SK-N-SH (cell line): ENCODE measurements at regions of chr12 and their contacts with region 1.

Region 1: GRCh38 chr12:121095544-121096198 is 37.0 kb upstream of the P2RX7 start:
- DNase-seq: peak; percentile 94
- H3K4me3 ChIP-seq: peak overlapping the region; percentile 43 to 67
- H3K27ac ChIP-seq: no peak overlapping the region
- H3K4me1 ChIP-seq: peaks cover 0 to 5% of the 10 kb centered on the region in 2 experiments; a peak in 1 of 4 replicates
- H3K27me3 ChIP-seq: peaks cover 7% of the 10 kb centered on the region; the same call in 1 of the 2 replicates
- CTCF ChIP-seq: peak; percentile 71
- EP300 ChIP-seq: no peak
- RAD21 ChIP-seq: peak; percentile 75

Region 2: DNA sequence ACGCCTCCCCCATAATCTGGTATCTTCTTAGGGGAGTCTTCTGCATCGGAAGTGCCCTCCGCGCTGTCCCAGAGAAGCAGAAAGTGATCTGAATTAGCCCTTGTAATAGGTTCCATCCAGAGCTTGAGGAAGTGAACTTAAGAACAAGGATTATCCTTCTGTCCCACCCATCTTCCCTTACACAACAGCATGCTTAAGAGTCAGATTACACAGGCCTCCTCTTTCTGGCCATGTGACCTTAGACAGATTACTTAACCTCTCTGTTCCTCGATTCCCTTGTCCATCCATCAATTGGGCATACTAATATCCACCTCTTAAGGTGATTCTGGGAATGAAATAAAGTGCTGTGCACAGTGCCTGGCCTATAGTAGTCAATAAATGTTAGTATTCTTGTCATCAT is 443.9 kb before region 1 on chr12:
- CTCF ChIA-PET with region 1: no interaction called
- POLR2A ChIA-PET with region 1: no interaction called
- DNase-seq: no peak
- H3K4me3 ChIP-seq: no peak overlapping the region
- H3K27ac ChIP-seq: no peak overlapping the region
- H3K4me1 ChIP-seq: peaks cover 0 to 14% of the 10 kb centered on the region in 2 experiments; a peak in 1 of 4 replicates
- H3K27me3 ChIP-seq: no peaks in the 10 kb centered on the region
- CTCF ChIP-seq: no peak
- EP300 ChIP-seq: no peak
- RAD21 ChIP-seq: no peak

Region 3: GRCh38 chr12:120971299-120972179 is 124.1 kb before region 1 on chr12:
- CTCF ChIA-PET with region 1: interaction called, 13 read pairs
- POLR2A ChIA-PET with region 1: no interaction called
- DNase-seq: peak; percentile 78
- H3K4me3 ChIP-seq: no peak overlapping the region
- H3K27ac ChIP-seq: no peak overlapping the region
- H3K4me1 ChIP-seq: peaks cover 0 to 2% of the 10 kb centered on the region in 2 experiments; a peak in 1 of 4 replicates
- H3K27me3 ChIP-seq: no peaks in the 10 kb centered on the region; the same call in 1 of the 2 replicates
- CTCF ChIP-seq: peak; percentile 78
- EP300 ChIP-seq: peak in 1 of 2 experiments; percentile 17; a peak in 1 of 4 replicates
- RAD21 ChIP-seq: peak; percentile 91

Region 4: DNA sequence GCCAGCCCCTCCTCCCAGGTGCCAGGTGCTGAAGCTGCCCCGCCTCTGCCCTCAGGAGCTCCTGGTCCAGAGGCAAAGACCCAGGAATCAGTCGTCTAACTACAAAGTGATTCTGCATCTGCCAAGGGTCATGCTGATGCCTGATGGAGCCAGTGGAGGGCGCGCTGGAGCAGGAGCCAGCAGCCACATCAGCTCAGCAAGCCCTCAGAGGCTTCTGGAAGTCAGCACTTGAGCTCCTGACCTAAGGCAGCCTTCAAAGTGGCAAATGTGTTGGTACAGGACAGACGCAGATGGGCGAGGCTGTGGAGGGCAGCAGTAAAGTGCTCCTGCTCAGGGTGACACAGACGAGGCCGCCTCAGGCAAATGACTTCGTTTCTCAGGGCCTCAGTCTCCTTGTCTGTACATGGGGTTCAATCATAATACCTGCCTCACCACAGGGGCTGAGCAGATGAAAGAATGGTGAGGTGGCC is 90.3 kb before region 1 on chr12:
- CTCF ChIA-PET with region 1: interaction called, 11 read pairs
- POLR2A ChIA-PET with region 1: no interaction called
- DNase-seq: peak; percentile 70
- H3K4me3 ChIP-seq: no peak overlapping the region; a peak in 1 of 4 replicates
- H3K27ac ChIP-seq: no peak overlapping the region
- H3K4me1 ChIP-seq: no peaks in the 10 kb centered on the region
- H3K27me3 ChIP-seq: no peaks in the 10 kb centered on the region
- CTCF ChIP-seq: peak; percentile 77
- EP300 ChIP-seq: no peak
- RAD21 ChIP-seq: peak; percentile 63

Region 5: DNA sequence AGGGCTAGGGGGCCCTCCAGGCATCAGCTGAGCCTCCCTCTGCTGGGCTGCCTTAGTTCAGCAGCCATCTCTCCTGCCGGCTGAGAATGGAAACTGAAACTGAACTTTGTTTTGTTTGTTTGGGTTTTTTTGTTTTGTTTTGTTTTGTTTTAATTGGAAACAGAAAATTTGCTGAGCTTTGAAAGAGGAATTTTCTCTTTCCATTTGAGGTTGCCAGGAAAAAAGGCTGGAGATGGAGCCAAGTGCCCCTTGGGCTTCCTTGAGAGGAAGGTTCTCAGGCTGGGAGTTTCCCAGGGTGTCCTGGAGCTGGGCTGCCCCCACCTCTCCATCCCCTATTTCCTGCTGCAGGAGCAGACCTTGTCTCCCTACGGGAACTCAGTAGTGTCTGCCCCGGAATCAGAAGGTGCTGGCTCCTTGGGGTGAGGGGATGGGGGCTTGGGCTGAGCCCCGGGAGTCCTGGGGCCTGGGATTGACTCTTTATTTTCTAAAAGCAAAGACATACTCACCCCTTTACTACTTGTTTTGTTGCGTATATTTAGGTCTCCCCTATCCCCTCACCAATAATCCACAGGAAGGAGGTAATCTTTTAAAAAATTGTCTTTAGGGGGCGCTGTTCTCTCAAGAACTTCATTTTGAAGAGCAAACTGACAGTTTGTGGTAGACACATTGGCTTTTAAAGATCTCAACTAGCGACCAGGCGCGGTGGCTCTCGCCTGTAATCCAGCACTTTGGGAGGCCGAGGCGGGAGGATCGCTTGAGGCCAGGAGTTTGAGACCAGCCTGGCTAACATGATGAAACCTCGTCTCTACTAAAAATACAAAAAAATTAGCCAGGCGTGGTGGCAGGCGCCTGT is 35.3 kb before region 1 on chr12:
- CTCF ChIA-PET with region 1: interaction called, 59 read pairs
- POLR2A ChIA-PET with region 1: no interaction called
- DNase-seq: peak; percentile 48
- H3K4me3 ChIP-seq: no peak overlapping the region
- H3K27ac ChIP-seq: no peak overlapping the region
- H3K4me1 ChIP-seq: peaks cover 0 to 2% of the 10 kb centered on the region in 2 experiments; a peak in 1 of 4 replicates
- H3K27me3 ChIP-seq: no peaks in the 10 kb centered on the region
- CTCF ChIP-seq: peak; percentile 70
- EP300 ChIP-seq: no peak
- RAD21 ChIP-seq: peak; percentile 60

Region 6: GRCh38 chr12:121110211-121110940 is 14.7 kb after region 1 on chr12:
- CTCF ChIA-PET with region 1: interaction called, 23 read pairs
- POLR2A ChIA-PET with region 1: no interaction called
- DNase-seq: peak; percentile 65
- H3K4me3 ChIP-seq: no peak overlapping the region; a peak in 1 of 4 replicates
- H3K27ac ChIP-seq: no peak overlapping the region
- H3K4me1 ChIP-seq: no peaks in the 10 kb centered on the region
- H3K27me3 ChIP-seq: no peaks in the 10 kb centered on the region
- CTCF ChIP-seq: peak; percentile 97
- EP300 ChIP-seq: no peak
- RAD21 ChIP-seq: peak; percentile 91

Region 7: DNA sequence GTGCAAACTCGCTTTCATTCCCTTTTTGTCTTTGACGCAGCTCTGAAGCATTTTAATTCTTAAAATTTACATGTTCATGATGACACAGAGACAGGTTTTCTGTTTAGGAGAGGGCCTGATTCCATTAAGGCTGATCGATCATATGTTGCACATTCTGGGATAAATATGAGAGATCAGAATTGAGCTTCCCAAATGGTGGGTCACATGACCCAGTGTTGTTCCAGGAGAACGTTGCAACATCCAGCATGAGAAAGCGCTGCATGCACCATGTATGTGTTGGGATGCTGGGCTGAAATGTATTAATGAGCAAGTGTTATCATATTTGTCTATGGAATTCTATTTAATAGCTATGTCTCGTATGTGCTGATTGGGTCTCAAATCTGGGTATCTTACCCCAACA is 54.5 kb after region 1 on chr12:
- CTCF ChIA-PET with region 1: no interaction called
- POLR2A ChIA-PET with region 1: no interaction called
- DNase-seq: no peak
- H3K4me3 ChIP-seq: no peak overlapping the region
- H3K27ac ChIP-seq: no peak overlapping the region
- H3K4me1 ChIP-seq: no peaks in the 10 kb centered on the region
- H3K27me3 ChIP-seq: no peaks in the 10 kb centered on the region
- CTCF ChIP-seq: no peak
- EP300 ChIP-seq: no peak
- RAD21 ChIP-seq: no peak